ENCODE measurements at regions of chr16 and their contacts with region 1.

Region 1: GRCh38 chr16:82169861-82170845 is at the start of gene MPHOSPH6:
- DNase-seq: peak; percentile 95
- ATAC-seq: peak; percentile 94
- H3K4me3 Mint-ChIP-seq: peak within 1 kb of the TSS; percentile 96
- H3K27ac Mint-ChIP-seq: peak within 1 kb of the TSS; percentile 97
- H3K4me1 Mint-ChIP-seq: peaks cover 31% of the 10 kb centered on the region
- H3K27me3 Mint-ChIP-seq: peaks cover 25% of the 10 kb centered on the region
- total RNA-seq, gene MPHOSPH6: 48.0 to 48.7 TPM

Region 2: GRCh38 chr16:82011199-82011641 is 158.9 kb before region 1 on chr16 and contains the start of gene SDR42E1:
- CTCF ChIA-PET with region 1: no interaction called
- POLR2A ChIA-PET with region 1: no interaction called
- intact Hi-C with region 1: loop called in 1 of 2 experiments (anchors 1 kb)
- DNase-seq: peak; percentile 82
- ATAC-seq: peak; percentile 80
- H3K4me3 Mint-ChIP-seq: peak within 1 kb of the TSS; percentile 84
- H3K27ac Mint-ChIP-seq: peak within 1 kb of the TSS; percentile 93
- H3K4me1 Mint-ChIP-seq: peaks cover 24% of the 10 kb centered on the region
- H3K27me3 Mint-ChIP-seq: peaks cover 13% of the 10 kb centered on the region
- total RNA-seq, gene SDR42E1: 7.4 to 8.2 TPM

Region 3: GRCh38 chr16:82082543-82083244 is 87.5 kb before region 1 on chr16:
- CTCF ChIA-PET with region 1: no interaction called
- POLR2A ChIA-PET with region 1: no interaction called
- intact Hi-C with region 1: loop called in 1 of 2 experiments (anchors 5 kb)
- DNase-seq: peak; percentile 33
- ATAC-seq: peak; percentile 98
- H3K4me3 Mint-ChIP-seq: no peak overlapping the region
- H3K27ac Mint-ChIP-seq: no peak overlapping the region
- H3K4me1 Mint-ChIP-seq: peaks cover 7% of the 10 kb centered on the region
- H3K27me3 Mint-ChIP-seq: peaks cover 36% of the 10 kb centered on the region

Region 4: DNA sequence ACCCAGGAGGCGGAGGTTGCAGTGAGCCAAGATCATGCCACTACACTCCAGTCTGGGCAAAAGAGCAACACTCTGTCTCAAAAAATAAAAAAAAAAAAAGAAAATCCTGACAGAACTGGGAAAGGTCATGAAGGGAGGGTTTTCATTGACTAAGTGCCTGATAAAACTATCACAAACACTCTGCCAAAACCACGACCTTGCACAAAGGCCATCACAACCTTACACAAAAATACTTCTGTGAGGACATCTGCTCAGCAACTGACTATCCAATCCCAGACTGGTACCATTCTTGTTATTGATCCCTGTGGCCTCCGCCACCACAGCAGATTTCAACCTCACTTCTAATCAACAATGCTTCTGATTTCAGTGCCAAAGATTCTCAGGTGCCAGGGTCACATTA is 40.3 kb before region 1 on chr16:
- CTCF ChIA-PET with region 1: no interaction called
- POLR2A ChIA-PET with region 1: no interaction called
- intact Hi-C with region 1: no loop called
- DNase-seq: no peak
- ATAC-seq: no peak
- H3K4me3 Mint-ChIP-seq: no peak overlapping the region
- H3K27ac Mint-ChIP-seq: no peak overlapping the region
- H3K4me1 Mint-ChIP-seq: peaks cover 17% of the 10 kb centered on the region
- H3K27me3 Mint-ChIP-seq: no peaks in the 10 kb centered on the region

Region 5: DNA sequence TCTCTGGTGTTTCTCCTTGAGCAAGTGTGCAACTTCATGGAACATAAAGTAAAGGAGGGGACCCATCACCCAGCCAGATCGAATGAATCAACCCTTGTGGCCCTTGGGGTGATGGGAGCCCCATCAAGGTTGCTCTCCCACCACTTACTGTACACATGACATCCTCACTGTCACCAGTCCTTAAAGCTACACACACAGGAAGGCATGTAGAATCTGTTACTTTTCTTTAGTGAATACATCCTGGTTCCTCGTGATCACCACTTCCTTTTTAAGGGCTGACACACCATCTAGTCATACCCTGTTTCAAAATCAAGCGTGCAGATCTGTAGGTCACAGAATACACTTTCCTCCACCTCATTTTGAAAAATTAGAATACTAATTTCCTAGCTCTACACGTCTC is 22.5 kb after region 1 on chr16:
- CTCF ChIA-PET with region 1: interaction called, 5 read pairs
- POLR2A ChIA-PET with region 1: interaction called, 4 read pairs
- intact Hi-C with region 1: loop called (anchors 1 to 2 kb)
- DNase-seq: peak; percentile 65
- ATAC-seq: peak; percentile 98
- H3K4me3 Mint-ChIP-seq: no peak overlapping the region
- H3K27ac Mint-ChIP-seq: peak overlapping the region; percentile 85
- H3K4me1 Mint-ChIP-seq: peaks cover 28% of the 10 kb centered on the region
- H3K27me3 Mint-ChIP-seq: peaks cover 14% of the 10 kb centered on the region

Measured in activated CD4-positive, alpha-beta T cell treated with anti-CD3 and anti-CD28 coated beads for 36 hours (primary cell).